Esophagus squamous epithelium (tissue), 5 donors: ENCODE measurements at regions of chrX and their contacts with region 1.

Region 1: DNA sequence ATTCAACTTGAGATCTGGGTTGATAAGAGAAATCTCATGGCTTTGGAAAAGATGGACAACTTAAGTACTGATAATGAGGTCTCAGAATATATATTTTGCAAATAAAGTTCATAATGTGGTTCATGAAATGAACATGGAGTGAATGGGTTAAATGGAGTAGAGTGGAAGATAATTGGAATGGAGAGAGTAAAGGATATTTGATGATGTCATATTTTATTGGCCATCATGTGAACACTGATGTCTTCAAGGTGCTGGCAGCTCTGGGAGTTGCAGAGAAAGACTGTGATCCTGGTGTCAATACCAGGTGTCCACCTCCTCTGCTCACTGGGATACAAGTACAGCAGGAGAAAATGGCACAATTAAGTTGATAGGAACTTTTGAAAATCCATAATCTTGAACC is 133.9 kb upstream of the ZXDA start:
- DNase-seq: no peak
- H3K4me3 ChIP-seq: no peak overlapping the region
- H3K27ac ChIP-seq: no peak overlapping the region
- H3K4me1 ChIP-seq: no peaks in the 10 kb centered on the region
- H3K27me3 ChIP-seq: no peaks in the 10 kb centered on the region
- CTCF ChIP-seq: no peak
- POLR2A ChIP-seq: no peak

Region 2: GRCh38 chrX:57984620-57985019 is 59.5 kb before region 1 on chrX:
- intact Hi-C with region 1: loop called (anchors 10 kb)
- DNase-seq: no peak
- H3K4me3 ChIP-seq: no peak overlapping the region
- H3K27ac ChIP-seq: no peak overlapping the region
- H3K4me1 ChIP-seq: no peaks in the 10 kb centered on the region
- H3K27me3 ChIP-seq: no peaks in the 10 kb centered on the region
- CTCF ChIP-seq: no peak
- POLR2A ChIP-seq: no peak